ENCODE measurements at regions of chr10 and their contacts with region 1.

Region 1: GRCh38 chr10:26556748-26557640 is 118.9 kb downstream of the APBB1IP start:
- DNase-seq: no peak
- ATAC-seq: peak; percentile 72
- H3K4me3 ChIP-seq: no peak overlapping the region
- H3K27ac ChIP-seq: no peak overlapping the region
- H3K4me1 ChIP-seq: no peaks in the 10 kb centered on the region
- H3K27me3 ChIP-seq: no peaks in the 10 kb centered on the region
- CTCF ChIP-seq: peak; percentile 87 to 96 (median 88)
- EP300 ChIP-seq: no peak
- POLR2A ChIP-seq: no peak
- RAD21 ChIP-seq: peak; percentile 99

Region 2: GRCh38 chr10:26486991-26487850 is 69.8 kb before region 1 on chr10:
- CTCF ChIA-PET with region 1: no interaction called
- POLR2A ChIA-PET with region 1: no interaction called
- RAD21 ChIA-PET with region 1: no interaction called
- SMC1A ChIA-PET with region 1: no interaction called
- in situ Hi-C with region 1: no loop called
- intact Hi-C with region 1: loop called (anchors 5 kb)
- DNase-seq: peak; percentile 79
- ATAC-seq: peak; percentile 94
- H3K4me3 ChIP-seq: peak overlapping the region; percentile 11; the same call in 1 of the 2 replicates
- H3K27ac ChIP-seq: peak overlapping the region; percentile 67
- H3K4me1 ChIP-seq: peaks cover 9% of the 10 kb centered on the region
- H3K27me3 ChIP-seq: no peaks in the 10 kb centered on the region
- CTCF ChIP-seq: no peak
- EP300 ChIP-seq: peak; percentile 83 to 88
- POLR2A ChIP-seq: no peak
- RAD21 ChIP-seq: no peak

Region 3: GRCh38 chr10:26586211-26586610 is 29.2 kb after region 1 on chr10:
- CTCF ChIA-PET with region 1: no interaction called
- POLR2A ChIA-PET with region 1: no interaction called
- RAD21 ChIA-PET with region 1: no interaction called
- SMC1A ChIA-PET with region 1: no interaction called
- in situ Hi-C with region 1: no loop called
- intact Hi-C with region 1: no loop called
- DNase-seq: no peak
- ATAC-seq: no peak
- H3K4me3 ChIP-seq: no peak overlapping the region
- H3K27ac ChIP-seq: no peak overlapping the region
- H3K4me1 ChIP-seq: no peaks in the 10 kb centered on the region
- H3K27me3 ChIP-seq: no peaks in the 10 kb centered on the region
- CTCF ChIP-seq: no peak
- EP300 ChIP-seq: no peak
- POLR2A ChIP-seq: no peak
- RAD21 ChIP-seq: no peak